Endothelial cell of umbilical vein (primary cell): ENCODE measurements at regions of chr5 and their contacts with region 1.

Region 1: DNA sequence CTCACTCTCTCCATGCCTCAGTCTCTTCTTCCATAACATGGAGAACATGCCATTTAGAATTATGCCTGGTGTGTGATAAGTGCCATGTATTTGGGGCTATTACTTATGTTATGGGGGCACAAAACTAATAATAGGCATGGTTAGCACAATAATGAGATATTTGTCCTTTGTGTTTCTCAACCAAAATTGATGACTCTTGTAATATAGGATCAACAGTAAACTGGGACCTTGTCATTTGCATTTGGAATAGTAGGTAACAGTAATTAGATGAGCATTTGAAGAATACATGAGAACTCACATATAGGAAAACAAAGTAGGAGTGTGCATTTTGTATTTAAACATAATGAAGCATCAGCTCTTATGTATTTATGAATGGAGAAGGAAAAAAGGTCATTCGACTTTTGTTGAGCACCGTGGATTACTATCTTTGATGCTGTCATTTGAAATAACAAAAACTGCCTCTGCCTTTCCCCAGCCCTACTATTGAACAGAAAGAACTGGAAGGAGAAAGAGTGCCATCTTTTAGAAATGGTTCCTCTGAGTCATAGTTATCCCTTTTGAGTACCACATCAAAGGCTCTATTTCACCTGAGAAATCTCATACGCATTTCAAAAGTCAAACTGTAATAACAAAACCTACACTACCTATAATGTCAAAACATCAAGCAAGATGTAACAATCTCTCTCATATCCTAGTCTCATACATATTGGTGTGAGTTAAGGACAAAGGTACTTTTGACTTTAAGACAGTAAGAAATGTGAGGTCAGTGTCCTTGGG is 655.2 kb downstream of the PDE4D start:
- DNase-seq: no peak
- H3K4me3 ChIP-seq: no peak overlapping the region
- H3K27ac ChIP-seq: no peak overlapping the region
- H3K4me1 ChIP-seq: peaks cover 25% of the 10 kb centered on the region
- H3K27me3 ChIP-seq: no peaks in the 10 kb centered on the region
- CTCF ChIP-seq: no peak
- POLR2A ChIP-seq: no peak

Region 2: DNA sequence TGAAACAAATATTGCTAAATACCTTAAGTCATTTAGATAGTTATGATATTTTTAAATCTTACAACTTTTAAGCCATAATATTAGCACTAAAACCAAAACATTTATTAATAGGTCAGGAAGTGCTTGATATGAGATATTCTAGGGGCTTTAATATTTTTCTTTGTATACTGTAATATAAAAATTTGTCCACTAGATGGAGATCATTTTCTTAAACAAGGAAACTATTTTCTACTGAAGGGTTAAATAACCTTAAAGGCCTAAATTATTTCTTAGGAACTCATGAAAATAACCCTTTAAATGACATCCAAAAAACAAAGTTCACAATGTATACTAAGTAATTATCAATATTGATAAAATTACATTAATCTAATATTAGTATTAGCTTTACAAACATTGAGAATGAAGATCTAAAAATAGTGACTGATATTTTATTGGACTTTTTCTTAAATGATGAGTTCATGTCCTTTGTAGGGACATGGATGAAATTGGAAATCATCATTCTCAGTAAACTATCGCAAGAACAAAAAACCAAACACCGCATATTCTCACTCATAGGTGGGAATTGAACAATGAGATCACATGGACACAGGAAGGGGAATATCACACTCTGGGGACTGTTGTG is 19.8 kb before region 1 on chr5:
- CTCF ChIA-PET with region 1: interaction called, 20 read pairs
- POLR2A ChIA-PET with region 1: no interaction called
- dilution Hi-C with region 1: no loop called
- intact Hi-C with region 1: no loop called
- DNase-seq: peak; percentile 54
- H3K4me3 ChIP-seq: no peak overlapping the region
- H3K27ac ChIP-seq: no peak overlapping the region
- H3K4me1 ChIP-seq: peaks cover 19% of the 10 kb centered on the region
- H3K27me3 ChIP-seq: no peaks in the 10 kb centered on the region
- CTCF ChIP-seq: peak in 1 of 2 donors; percentile 2
- POLR2A ChIP-seq: no peak

Region 3: DNA sequence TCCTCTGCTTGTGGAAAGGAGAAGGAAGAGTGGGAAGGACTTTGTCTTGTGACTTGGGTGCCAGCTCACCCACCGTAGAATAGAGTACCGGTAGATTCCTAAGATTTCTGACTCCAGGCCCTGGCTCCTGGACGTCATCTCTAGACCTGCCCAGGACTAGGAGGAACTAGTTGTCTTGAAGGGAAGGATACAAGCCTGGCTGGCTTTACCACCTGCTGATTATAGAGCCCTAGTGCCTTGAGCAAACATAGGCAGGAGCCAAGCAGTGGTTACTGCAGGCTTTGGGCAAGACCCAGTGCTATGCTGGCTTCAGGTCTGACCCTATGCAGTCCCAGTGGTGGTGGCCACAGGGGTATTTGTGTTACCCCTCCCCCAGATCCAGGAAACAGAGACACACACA is 49.0 kb after region 1 on chr5:
- CTCF ChIA-PET with region 1: interaction called, 3 read pairs
- POLR2A ChIA-PET with region 1: no interaction called
- dilution Hi-C with region 1: no loop called
- intact Hi-C with region 1: loop called (anchors 2 kb)
- DNase-seq: no peak
- H3K4me3 ChIP-seq: no peak overlapping the region
- H3K27ac ChIP-seq: peak overlapping the region; percentile 92
- H3K4me1 ChIP-seq: peaks cover 29% of the 10 kb centered on the region
- H3K27me3 ChIP-seq: no peaks in the 10 kb centered on the region
- CTCF ChIP-seq: no peak
- POLR2A ChIP-seq: no peak